ENCODE measurements at regions of chr16 and their contacts with region 1.

Region 1: DNA sequence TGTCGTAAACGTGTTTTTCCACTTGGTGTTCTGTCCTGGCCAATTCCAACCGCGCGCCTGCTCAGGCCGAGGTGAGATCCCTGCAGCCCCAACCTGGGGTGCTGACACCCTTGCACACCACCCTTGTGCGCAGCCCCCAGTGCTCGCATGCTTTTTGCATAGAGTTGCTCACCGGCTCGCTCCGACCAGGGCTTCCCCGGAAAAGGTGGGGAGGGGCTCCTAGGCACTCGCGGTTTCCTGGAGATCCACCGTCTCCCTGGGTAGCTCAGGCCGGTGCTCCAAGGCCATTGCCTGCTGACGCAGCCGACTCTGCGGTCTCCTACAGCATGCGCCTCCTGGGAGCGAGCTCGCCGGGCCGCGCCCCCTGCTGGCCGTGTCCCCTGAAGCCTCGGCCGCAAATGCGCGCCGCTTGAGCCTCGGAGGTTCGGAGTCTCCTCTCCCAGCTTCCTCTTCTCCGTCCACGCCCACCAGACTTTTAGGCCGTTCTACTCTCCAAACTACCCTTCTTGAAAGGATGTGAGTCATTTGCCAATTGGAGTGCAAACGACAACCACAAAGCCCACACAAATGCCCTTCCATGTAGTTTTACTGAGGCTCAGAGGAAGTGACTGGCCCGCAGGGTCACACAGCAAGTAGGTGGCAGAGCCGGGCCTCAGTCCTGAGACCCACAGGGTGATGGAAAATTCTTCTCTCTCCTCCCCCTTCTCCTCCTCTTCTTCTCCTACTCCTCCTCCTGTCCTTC is 7.2 kb upstream of the PDP2 start:
- DNase-seq: peak; percentile 97
- H3K4me3 Mint-ChIP-seq: peak overlapping the region; percentile 87
- H3K27ac Mint-ChIP-seq: peak overlapping the region; percentile 94
- H3K4me1 Mint-ChIP-seq: peaks cover 47% of the 10 kb centered on the region
- H3K27me3 Mint-ChIP-seq: no peaks in the 10 kb centered on the region

Region 2: GRCh38 chr16:66516808-66517585 is 356.1 kb before region 1 on chr16:
- intact Hi-C with region 1: loop called (anchors 2 kb)
- DNase-seq: peak; percentile 95
- H3K4me3 Mint-ChIP-seq: peak overlapping the region; percentile 89
- H3K27ac Mint-ChIP-seq: peak overlapping the region; percentile 99
- H3K4me1 Mint-ChIP-seq: peaks cover 67% of the 10 kb centered on the region
- H3K27me3 Mint-ChIP-seq: no peaks in the 10 kb centered on the region

Region 3: DNA sequence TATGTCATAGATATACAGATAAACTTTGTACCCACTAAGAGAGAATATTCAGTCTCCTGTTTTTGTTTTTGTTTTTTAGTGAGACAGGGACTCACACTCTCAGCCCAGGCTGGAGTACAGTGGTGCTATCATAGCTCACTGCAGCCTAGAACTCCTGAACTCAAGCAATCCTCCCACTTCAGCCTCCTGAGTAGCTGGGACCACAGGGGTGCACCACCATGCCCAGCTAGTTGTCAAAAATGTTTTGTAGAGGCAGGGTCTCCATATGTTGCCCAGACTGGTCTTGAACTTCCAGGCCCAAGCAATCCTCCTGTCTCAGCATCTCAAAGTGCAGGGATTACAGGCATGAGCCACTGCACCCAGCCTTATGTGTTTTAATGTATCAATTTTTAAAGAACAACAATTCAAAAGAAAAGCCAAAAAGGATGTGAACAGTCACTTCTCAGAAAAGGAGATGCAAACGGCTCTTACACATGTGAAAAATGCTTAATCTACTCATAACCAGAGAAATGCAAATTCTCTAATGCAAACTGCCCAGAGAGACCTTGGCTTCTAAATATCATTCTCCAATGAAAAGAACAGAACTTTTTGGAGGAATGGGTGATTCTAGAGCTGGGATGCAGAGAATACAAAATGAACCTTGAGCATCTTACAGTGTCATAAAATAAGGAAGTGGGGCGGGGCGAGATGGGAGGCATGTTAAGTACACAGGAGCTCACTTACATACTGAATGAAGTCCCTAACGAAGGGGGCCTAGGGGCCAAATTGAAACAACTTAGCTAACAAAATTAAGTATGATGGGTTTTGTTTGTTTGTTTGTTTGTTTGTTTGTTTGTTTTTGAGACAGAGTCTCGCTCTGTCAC is 275.9 kb before region 1 on chr16:
- intact Hi-C with region 1: no loop called
- DNase-seq: peak; percentile 74
- H3K4me3 Mint-ChIP-seq: peak overlapping the region; percentile 47
- H3K27ac Mint-ChIP-seq: peak overlapping the region; percentile 80
- H3K4me1 Mint-ChIP-seq: peaks cover 34% of the 10 kb centered on the region
- H3K27me3 Mint-ChIP-seq: no peaks in the 10 kb centered on the region

Region 4: DNA sequence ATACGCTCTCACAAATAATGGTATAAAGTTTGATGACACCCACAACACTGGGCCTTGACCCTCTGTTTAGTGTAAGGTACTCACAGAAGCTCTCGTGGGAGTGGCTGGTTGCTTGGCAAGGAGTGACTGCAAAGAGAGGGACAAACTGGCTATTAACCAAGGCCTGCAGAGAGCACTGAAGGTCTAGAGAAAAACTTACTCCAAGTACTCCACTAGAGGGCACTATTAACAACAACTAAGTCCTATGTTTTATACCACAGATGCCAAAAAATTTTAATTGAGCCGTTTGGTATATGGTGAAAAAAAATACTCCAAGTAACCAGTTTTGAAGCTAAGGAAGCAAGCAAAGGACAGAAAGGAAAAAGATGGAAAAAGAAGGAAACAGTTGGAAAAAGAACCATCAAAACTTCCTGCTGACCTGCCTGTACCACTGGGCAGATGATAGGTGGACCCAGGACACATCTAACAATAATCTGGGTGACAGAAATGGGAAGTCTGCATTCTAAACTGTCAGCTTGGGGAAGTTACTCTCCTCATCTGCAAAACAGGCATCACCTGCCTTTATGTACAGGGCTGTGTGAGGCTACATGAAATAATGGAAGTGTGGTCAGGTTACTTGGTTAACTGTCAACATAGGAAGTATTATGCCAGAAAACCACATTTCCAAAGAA is 144.9 kb before region 1 on chr16:
- intact Hi-C with region 1: loop called (anchors 2 kb)
- DNase-seq: peak; percentile 68
- H3K4me3 Mint-ChIP-seq: no peak overlapping the region
- H3K27ac Mint-ChIP-seq: peak overlapping the region; percentile 72
- H3K4me1 Mint-ChIP-seq: peaks cover 7% of the 10 kb centered on the region
- H3K27me3 Mint-ChIP-seq: no peaks in the 10 kb centered on the region

Region 5: DNA sequence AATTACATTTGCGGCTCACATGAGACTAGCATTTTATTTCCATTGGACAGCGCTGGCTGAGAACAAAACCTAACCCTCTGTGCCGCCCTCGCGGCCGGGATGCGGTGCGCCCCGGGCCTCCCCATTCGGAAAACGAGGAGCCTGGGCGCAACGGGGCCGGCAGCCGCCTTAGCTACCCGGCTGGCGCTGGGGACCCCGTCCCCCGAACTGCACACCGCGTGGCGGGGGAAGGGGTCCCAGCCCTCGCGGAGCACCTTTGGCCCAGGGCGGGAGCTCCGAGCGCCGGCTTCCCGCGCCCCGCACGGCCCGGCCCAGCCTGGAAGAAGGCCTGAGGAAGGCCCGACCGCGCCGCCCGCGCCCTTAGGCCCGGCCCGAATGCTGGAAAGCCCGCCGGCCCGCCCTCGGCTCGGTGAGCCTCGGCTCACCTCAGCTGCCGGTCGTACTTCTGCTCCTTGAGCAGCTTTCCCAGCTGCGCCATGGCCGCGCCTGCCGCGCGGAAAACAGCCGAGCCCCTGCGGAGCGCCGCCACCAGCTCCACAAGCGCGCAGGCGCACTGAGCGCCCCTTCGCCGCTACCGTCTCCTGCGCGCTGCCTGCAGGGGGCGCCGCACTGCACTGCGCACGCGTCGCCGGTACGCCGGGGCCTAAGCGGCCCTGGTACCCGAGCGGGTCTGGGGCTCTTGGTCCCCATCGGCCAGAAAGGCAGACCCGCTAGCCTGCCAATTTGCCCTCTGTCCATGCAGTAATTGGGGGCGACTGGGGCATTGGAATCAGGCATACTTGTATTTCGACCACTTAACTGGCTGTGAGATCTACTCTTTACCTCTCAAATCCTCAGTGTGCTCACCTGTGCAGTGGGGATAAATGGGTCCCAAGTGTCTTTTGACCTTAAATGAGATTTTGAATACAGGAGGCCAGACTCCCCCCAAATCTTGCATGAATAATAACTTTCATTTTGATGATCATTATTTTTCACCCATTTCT is 42.4 kb before region 1 on chr16 and contains the start of gene NAE1:
- intact Hi-C with region 1: loop called (anchors 1 kb)
- DNase-seq: peak; percentile 98
- H3K4me3 Mint-ChIP-seq: peak within 1 kb of the TSS; percentile 78
- H3K27ac Mint-ChIP-seq: peak within 1 kb of the TSS; percentile 85
- H3K4me1 Mint-ChIP-seq: peaks cover 30% of the 10 kb centered on the region
- H3K27me3 Mint-ChIP-seq: peaks cover 1% of the 10 kb centered on the region
- total RNA-seq, gene NAE1: 118 and 125 TPM in 2 replicates

Region 6: DNA sequence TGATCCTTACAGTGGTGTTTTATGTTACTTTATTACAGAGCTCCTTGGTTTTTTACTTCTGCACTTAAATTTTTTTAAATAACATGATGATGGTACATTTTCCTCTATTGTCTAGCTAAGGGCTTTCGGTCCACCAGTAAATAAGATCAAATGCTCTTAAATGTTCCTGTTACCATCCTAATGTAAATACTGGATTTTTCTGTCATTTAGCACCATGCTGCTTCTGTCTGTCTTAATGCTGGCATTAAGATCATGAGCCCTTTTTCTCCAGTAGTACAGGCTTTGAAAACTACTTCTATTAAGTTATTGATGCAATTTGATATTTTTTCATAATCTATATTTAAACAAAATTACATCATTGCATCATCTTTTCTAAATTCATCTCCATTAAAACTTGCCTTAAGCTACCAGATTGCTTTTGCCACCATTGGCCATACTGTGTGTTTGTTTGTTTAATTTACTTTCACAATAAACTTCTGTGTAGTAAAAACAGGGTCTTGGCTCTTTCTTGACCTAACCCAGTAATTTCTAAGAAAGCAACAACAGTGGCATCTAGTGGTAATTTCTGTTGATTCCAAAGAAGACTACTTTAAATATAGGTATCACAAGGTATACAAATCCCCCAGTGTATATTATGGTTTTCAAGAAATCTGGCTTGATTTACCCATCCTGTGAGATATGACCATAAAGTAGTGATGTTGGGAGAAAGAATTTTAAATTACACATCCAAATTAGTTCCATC is 227.6 kb after region 1 on chr16:
- intact Hi-C with region 1: no loop called
- DNase-seq: no peak
- H3K4me3 Mint-ChIP-seq: no peak overlapping the region
- H3K27ac Mint-ChIP-seq: no peak overlapping the region
- H3K4me1 Mint-ChIP-seq: no peaks in the 10 kb centered on the region
- H3K27me3 Mint-ChIP-seq: no peaks in the 10 kb centered on the region